Heart left ventricle (tissue), 16 donors: ENCODE measurements at regions of chr7 and their contacts with region 1.

Region 1: GRCh38 chr7:149714050-149714909 is 59.1 kb downstream of the ZNF467 start:
- DNase-seq: peak; percentile 92 to 97 (median 93)
- ATAC-seq: peak; percentile 71 to 90 (median 88)
- H3K4me3 ChIP-seq: peak overlapping the region; percentile 54 to 94 (median 78)
- H3K27ac ChIP-seq: peak overlapping the region in 11 of 12 donors; percentile 72 to 94 (median 86)
- H3K4me1 ChIP-seq: peaks cover 4 to 49% (median 24%) of the 10 kb centered on the region in 12 donors
- H3K27me3 ChIP-seq: no peaks in the 10 kb centered on the region
- CTCF ChIP-seq: peak in 1 of 12 donors; percentile 10
- POLR2A ChIP-seq: no peak

Region 2: GRCh38 chr7:148954766-148955165 is 759.5 kb before region 1 on chr7:
- intact Hi-C with region 1: no loop called
- DNase-seq: no peak
- ATAC-seq: no peak
- H3K4me3 ChIP-seq: no peak overlapping the region
- H3K27ac ChIP-seq: no peak overlapping the region
- H3K4me1 ChIP-seq: no peaks in the 10 kb centered on the region
- H3K27me3 ChIP-seq: no peaks in the 10 kb centered on the region
- CTCF ChIP-seq: no peak
- POLR2A ChIP-seq: no peak

Region 3: DNA sequence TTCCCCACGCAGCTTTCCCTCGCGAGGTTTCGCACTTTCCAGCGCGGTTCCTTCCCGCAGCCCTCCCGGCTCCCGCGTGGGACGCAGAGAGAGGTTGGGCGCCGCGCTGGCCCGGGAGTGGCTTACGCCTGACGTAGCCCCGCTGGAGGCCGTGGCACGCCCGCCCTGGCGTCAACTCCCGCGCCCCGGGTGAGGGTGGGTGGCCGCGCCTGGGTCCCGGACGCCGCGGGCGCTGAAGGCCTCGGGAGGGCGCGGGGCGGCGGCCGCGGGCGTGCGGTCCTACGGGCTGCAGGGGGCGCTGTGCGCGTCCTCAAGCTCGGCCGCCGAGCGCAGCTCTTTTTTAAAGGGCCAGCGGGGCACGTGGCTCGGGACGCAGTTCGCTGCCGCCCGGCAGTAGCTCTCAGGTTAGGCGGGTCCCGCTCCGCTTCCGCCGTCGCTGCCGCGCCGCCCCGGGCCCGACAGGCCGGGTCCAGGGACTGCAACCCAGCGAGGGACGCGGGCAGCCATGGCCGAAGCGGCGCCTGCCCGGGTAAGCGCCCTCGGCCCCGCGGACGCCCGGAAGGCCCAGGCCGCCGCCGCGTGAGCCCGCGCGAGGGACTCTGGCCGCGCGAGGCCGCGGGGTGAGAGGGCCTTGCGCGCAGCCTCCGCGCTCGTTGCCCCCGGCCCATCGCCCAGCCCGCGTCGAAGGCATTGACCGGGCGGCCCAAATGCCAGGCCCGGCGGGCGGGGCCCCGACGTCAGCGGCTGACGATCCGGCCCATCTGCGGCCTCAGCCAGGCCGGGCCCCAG is 452.3 kb before region 1 on chr7 and contains the start of gene ZNF783:
- intact Hi-C with region 1: no loop called
- DNase-seq: peak; percentile 86 to 94 (median 90)
- ATAC-seq: peak; percentile 93 to 97 (median 96)
- H3K4me3 ChIP-seq: peak within 1 kb of the TSS; percentile 41 to 93 (median 64)
- H3K27ac ChIP-seq: peak within 1 kb of the TSS; percentile 77 to 94 (median 90)
- H3K4me1 ChIP-seq: peaks cover 0 to 28% (median 15%) of the 10 kb centered on the region in 12 donors
- H3K27me3 ChIP-seq: no peaks in the 10 kb centered on the region
- CTCF ChIP-seq: peak; percentile 54 to 97 (median 88)
- POLR2A ChIP-seq: peak in 1 of 2 donors; percentile 42
- total RNA-seq, gene ZNF783: 2.8 to 9.0 (median 3.4) TPM

Region 4: GRCh38 chr7:149624419-149625339 is 89.6 kb before region 1 on chr7:
- intact Hi-C with region 1: loop called in 1 of 10 experiments (anchors 10 kb)
- DNase-seq: peak; percentile 93 to 98 (median 96)
- ATAC-seq: peak; percentile 96 to 98 (median 98)
- H3K4me3 ChIP-seq: peak overlapping the region; percentile 79 to 100 (median 97)
- H3K27ac ChIP-seq: peak overlapping the region; percentile 81 to 91 (median 89)
- H3K4me1 ChIP-seq: peaks cover 0 to 30% (median 21%) of the 10 kb centered on the region in 12 donors
- H3K27me3 ChIP-seq: no peaks in the 10 kb centered on the region
- CTCF ChIP-seq: peak in 11 of 12 donors; percentile 94 to 100 (median 99)
- POLR2A ChIP-seq: peak in 1 of 2 donors; percentile 73